Activated T-helper 2 cell treated with anti-CD3 and anti-CD28 coated beads, Interferon-gamma antibody, Interleukin-2, Interleukin-4, amounts not matched to agents 10 μg/mL and 5 μg/mL and 100 μg/mL, durations not matched to agents 14 hours and 24 hours and 36 hours (primary cell): ENCODE measurements at regions of chr2 and their contacts with region 1.

Region 1: DNA sequence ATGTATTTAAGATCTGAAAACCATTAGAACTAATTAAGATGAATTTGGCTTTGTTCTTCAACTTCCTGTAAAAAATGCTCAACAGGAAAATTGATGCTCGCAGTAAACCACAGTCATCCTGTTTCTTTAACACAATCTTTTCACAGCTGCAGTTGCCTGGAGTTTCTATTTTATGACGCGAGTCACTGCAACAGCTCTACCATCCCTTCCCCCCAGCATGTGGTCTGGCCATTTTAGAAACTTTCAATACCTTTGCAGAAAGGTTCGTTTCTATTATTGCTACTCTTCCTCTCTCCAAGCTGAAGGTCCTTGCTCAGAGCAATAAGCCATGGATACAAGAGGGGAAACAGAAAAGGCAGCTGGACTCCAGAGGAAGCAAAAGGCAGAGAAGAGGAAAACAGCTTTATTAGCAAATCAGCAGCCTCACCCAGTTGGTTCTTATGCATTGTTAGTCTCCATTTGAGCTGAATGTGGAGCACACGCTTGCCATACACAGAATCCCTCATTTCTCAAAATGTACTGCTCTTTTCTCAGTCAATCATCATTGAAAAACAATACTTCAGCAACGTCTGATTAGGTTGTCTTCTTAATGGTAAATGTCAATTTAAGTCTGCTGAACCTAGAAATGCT is 3.9 kb downstream of the WIPF1 start:
- DNase-seq: peak; percentile 67
- H3K4me3 Mint-ChIP-seq: peak overlapping the region; percentile 86
- H3K27ac Mint-ChIP-seq: peak overlapping the region; percentile 99
- H3K4me1 Mint-ChIP-seq: peaks cover 58% of the 10 kb centered on the region
- H3K27me3 Mint-ChIP-seq: no peaks in the 10 kb centered on the region

Region 2: DNA sequence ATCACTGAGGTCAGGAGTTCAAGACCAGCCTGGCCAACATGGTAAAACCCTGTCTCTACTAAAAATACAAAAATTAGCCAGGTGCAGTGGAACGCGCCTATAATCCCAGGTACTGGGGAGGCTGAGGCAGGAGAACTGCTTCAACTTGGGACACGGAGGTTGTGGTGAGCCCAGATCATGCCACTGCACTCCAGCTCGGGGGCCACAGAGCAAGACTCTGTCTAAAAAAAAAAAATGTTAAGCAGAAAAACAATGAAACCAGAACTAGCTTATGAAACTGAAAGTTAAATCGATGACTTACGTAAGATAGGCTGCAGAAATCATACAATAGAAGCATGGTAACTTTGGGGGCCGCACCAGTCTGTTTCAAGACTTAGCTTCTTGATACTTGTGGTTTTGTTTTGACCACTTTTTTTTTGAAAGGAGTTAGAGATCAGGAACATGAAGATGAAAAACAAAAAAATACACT is 100.7 kb before region 1 on chr2:
- intact Hi-C with region 1: loop called (anchors 2 kb)
- DNase-seq: peak; percentile 52
- H3K4me3 Mint-ChIP-seq: peak overlapping the region; percentile 68
- H3K27ac Mint-ChIP-seq: peak overlapping the region; percentile 92
- H3K4me1 Mint-ChIP-seq: peaks cover 54% of the 10 kb centered on the region
- H3K27me3 Mint-ChIP-seq: no peaks in the 10 kb centered on the region

Region 3: GRCh38 chr2:174577967-174578589 is 15.6 kb before region 1 on chr2:
- intact Hi-C with region 1: loop called (anchors 1 kb)
- DNase-seq: no peak
- H3K4me3 Mint-ChIP-seq: no peak overlapping the region
- H3K27ac Mint-ChIP-seq: no peak overlapping the region
- H3K4me1 Mint-ChIP-seq: peaks cover 54% of the 10 kb centered on the region
- H3K27me3 Mint-ChIP-seq: no peaks in the 10 kb centered on the region

Region 4: DNA sequence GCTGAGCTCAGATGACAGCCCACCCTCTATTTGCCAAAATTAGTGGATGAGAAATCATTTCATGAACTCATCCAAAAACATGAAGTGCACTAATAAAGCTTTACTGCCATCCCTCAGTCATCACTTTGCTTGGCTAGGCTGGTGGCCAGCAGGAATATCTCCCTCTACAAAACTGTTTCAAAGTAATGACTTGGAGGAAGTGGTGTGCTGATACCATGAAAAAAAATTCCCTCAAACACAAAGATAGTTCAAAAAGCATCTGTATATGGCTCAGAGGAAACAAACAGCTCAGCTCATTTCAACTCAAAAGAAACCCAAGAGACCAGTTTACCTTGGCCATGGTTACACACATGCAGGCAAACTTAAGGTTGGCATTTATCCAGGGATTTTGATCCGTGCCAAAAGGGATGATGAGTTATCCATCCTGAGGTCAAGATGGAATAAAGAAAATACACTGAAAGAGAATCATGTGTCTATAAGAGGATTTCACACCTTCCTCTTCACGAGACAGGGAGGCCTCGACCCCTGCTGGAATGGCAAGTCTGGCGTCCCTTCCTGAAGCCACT is 22.3 kb after region 1 on chr2:
- intact Hi-C with region 1: loop called (anchors 1 kb)
- DNase-seq: no peak
- H3K4me3 Mint-ChIP-seq: peak overlapping the region; percentile 9
- H3K27ac Mint-ChIP-seq: peak overlapping the region; percentile 80
- H3K4me1 Mint-ChIP-seq: peaks cover 72% of the 10 kb centered on the region
- H3K27me3 Mint-ChIP-seq: no peaks in the 10 kb centered on the region

Region 5: GRCh38 chr2:174711206-174711605 is 117.5 kb after region 1 on chr2:
- intact Hi-C with region 1: no loop called
- DNase-seq: no peak
- H3K4me3 Mint-ChIP-seq: no peak overlapping the region
- H3K27ac Mint-ChIP-seq: no peak overlapping the region
- H3K4me1 Mint-ChIP-seq: no peaks in the 10 kb centered on the region
- H3K27me3 Mint-ChIP-seq: peaks cover 14% of the 10 kb centered on the region

Region 6: DNA sequence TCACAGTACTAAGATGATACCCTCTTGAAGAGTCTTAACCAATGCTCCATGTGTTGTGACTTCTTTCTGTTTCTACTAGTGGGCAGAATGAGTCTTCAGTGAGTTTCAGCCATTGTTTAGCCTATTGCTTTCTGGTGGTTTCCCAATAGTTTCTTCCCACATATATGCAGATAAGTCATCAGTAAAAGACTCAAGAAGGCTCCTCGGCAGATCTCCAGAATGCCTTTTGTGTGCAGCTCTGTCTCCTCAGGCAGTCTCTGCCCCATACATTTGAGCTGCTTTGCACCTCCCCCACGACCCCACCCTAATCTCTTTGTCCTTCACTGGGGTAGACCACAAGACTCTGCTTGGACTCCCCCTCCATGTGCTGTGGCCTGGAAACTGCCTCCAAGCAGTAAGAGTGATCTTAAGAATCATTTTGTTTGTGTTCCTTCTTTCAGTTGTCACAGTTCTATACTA is 242.1 kb after region 1 on chr2:
- intact Hi-C with region 1: loop called (anchors 10 kb)
- DNase-seq: no peak
- H3K4me3 Mint-ChIP-seq: peak overlapping the region; percentile 58
- H3K27ac Mint-ChIP-seq: peak overlapping the region; percentile 95
- H3K4me1 Mint-ChIP-seq: peaks cover 31% of the 10 kb centered on the region
- H3K27me3 Mint-ChIP-seq: peaks cover 3% of the 10 kb centered on the region